Head of caudate nucleus (tissue), 42 donors: ENCODE measurements at regions of chr1 and their contacts with region 1.

Region 1: GRCh38 chr1:176897350-176898236 is 266.9 kb downstream of the ASTN1 start:
- DNase-seq: peak in 41 of 42 donors; percentile 58 to 90 (median 75)

Region 2: DNA sequence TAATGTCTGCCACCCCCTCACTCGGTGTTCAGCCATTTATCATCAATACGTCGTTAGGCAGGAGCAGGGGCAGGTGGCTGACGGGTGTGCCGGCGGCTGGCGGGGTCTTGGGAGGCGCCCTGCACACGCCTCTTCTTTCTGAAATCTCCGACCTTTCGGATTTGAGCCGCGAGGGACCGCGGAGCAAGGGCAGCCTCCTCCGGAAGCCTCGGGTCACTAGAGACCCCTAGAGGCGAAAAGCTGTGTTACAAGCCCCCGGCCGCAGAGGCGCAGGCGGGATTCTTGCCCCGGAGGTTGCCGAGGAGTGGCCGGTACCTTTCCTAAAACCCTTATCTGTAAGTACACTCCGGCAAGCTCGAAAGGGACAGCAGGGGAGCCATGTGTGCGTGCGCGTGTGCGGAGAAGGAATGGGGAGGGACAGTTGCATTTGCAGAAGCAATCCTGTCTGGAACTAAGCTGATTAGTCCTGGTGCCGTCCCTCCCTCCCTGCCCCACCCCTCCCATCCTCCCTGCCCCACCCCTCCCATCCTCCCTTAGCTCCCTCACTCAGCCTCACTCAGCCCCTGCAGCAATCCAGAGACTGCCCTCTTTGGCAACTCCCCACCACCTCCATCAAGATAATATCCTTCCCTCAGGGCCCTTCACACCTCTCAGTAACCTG is 284.2 kb after region 1 on chr1:
- intact Hi-C with region 1: loop called (anchors 5 kb)
- DNase-seq: peak; percentile 46 to 91 (median 77)

Region 3: DNA sequence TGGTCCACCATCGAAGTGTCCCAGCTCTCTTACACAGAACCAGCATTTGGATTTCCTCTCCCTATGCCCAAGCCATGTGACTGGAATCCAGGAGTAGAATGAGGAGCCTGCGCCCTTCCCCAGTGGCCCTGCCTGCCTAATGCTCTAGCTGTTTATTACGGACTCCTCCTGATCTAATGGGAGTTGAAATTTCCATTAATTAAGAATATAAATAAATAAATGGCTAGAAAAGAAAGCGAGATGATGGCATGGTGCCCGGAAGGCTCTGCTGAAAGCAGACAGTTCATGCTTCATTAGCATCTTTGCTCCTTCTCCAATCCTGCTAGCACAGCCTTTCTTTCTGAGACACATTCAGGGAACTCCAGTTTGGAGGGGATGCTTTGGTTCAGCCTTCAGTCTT is 856.1 kb after region 1 on chr1:
- intact Hi-C with region 1: no loop called
- DNase-seq: peak in 38 of 42 donors; percentile 10 to 79 (median 38)

Region 4: DNA sequence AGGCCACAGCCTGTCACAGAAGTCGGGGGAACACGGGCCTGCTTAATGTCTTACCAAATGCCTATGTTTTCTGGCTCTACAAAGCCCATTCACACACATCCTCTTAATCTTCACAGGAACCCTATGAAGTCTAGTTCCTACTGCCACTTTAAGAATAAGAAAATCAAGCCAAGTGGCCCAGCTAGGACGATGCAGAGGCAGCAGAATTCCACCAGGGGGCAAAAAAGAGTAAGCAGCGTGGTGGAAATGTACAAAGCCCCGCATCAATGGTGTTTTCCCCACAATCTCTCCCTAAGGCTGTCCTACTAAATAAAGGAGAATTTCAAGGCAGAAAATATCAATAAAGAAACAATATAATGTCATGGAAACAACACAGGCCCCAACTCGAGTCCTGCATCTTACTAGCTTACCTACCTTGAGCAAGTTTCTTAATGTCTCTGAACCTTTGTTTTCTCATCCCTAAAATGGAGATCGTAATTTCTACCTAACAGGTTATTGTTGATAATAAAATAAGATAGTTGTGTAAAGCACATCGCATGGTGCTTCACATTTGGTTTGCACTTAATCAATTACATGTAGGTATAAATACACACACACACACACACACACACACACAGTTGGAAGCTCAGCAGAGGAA is 1050.9 kb after region 1 on chr1:
- intact Hi-C with region 1: loop called (anchors 5 kb)
- DNase-seq: peak; percentile 39 to 88 (median 74)